ENCODE measurements at regions of chr17 and their contacts with region 1.

Region 1: GRCh38 chr17:27396941-27397340 is 59.3 kb upstream of the KSR1 start:
- DNase-seq: no peak
- ATAC-seq: no peak
- H3K4me3 ChIP-seq: no peak overlapping the region
- H3K27ac ChIP-seq: no peak overlapping the region
- H3K4me1 ChIP-seq: no peaks in the 10 kb centered on the region
- H3K27me3 ChIP-seq: peaks cover 0 to 12% of the 10 kb centered on the region in 2 experiments; a peak in 2 of 5 replicates
- CTCF ChIP-seq: no peak
- EP300 ChIP-seq: no peak
- POLR2A ChIP-seq: no peak
- RAD21 ChIP-seq: no peak

Region 2: GRCh38 chr17:27299384-27300049 is 97.4 kb before region 1 on chr17:
- CTCF ChIA-PET with region 1: no interaction called
- POLR2A ChIA-PET with region 1: no interaction called
- in situ Hi-C with region 1: no loop called
- intact Hi-C with region 1: no loop called
- DNase-seq: no peak
- ATAC-seq: no peak
- H3K4me3 ChIP-seq: peak overlapping the region in 1 of 3 experiments; percentile 12; a peak in 1 of 6 replicates
- H3K27ac ChIP-seq: no peak overlapping the region
- H3K4me1 ChIP-seq: peaks cover 64% of the 10 kb centered on the region
- H3K27me3 ChIP-seq: no peaks in the 10 kb centered on the region; a peak in 1 of 5 replicates
- CTCF ChIP-seq: no peak
- EP300 ChIP-seq: no peak
- POLR2A ChIP-seq: no peak
- RAD21 ChIP-seq: no peak

Region 3: GRCh38 chr17:27446569-27447301 is 49.8 kb after region 1 on chr17:
- CTCF ChIA-PET with region 1: no interaction called
- POLR2A ChIA-PET with region 1: no interaction called
- in situ Hi-C with region 1: loop called (anchors 5 kb)
- intact Hi-C with region 1: no loop called
- DNase-seq: no peak
- ATAC-seq: no peak
- H3K4me3 ChIP-seq: no peak overlapping the region
- H3K27ac ChIP-seq: no peak overlapping the region
- H3K4me1 ChIP-seq: no peaks in the 10 kb centered on the region
- H3K27me3 ChIP-seq: peaks cover 2 to 33% of the 10 kb centered on the region in 2 experiments; a peak in 3 of 5 replicates
- CTCF ChIP-seq: no peak
- EP300 ChIP-seq: no peak
- POLR2A ChIP-seq: no peak
- RAD21 ChIP-seq: no peak